HCT116 (cell line): ENCODE measurements at regions of chr3 and their contacts with region 1.

Region 1: GRCh38 chr3:50227390-50228183 is 8.4 kb upstream of the GNAI2 start:
- DNase-seq: peak; percentile 95
- ATAC-seq: peak; percentile 86
- H3K4me3 ChIP-seq: peak overlapping the region; percentile 58 to 87
- H3K27ac ChIP-seq: peak overlapping the region; percentile 87
- H3K4me1 ChIP-seq: peaks cover 10 to 34% of the 10 kb centered on the region in 2 experiments
- H3K27me3 ChIP-seq: no peaks in the 10 kb centered on the region
- CTCF ChIP-seq: peak in 2 of 3 experiments; percentile 70 to 76; a peak in 4 of 6 replicates
- POLR2A ChIP-seq: peak; percentile 62
- RAD21 ChIP-seq: no peak

Region 2: GRCh38 chr3:50121416-50122032 is 106.1 kb before region 1 on chr3:
- CTCF ChIA-PET with region 1: interaction called, 7 read pairs
- POLR2A ChIA-PET with region 1: no interaction called
- RAD21 ChIA-PET with region 1: no interaction called
- intact Hi-C with region 1: loop called (anchors 1 kb)
- DNase-seq: peak; percentile 56
- ATAC-seq: peak; percentile 94
- H3K4me3 ChIP-seq: no peak overlapping the region
- H3K27ac ChIP-seq: no peak overlapping the region
- H3K4me1 ChIP-seq: no peaks in the 10 kb centered on the region
- H3K27me3 ChIP-seq: no peaks in the 10 kb centered on the region
- CTCF ChIP-seq: peak; percentile 81 to 84 (median 82)
- POLR2A ChIP-seq: no peak
- RAD21 ChIP-seq: peak; percentile 91

Region 3: GRCh38 chr3:50181985-50182384 is 45.6 kb before region 1 on chr3:
- CTCF ChIA-PET with region 1: no interaction called
- POLR2A ChIA-PET with region 1: no interaction called
- RAD21 ChIA-PET with region 1: no interaction called
- intact Hi-C with region 1: no loop called
- DNase-seq: no peak
- ATAC-seq: no peak
- H3K4me3 ChIP-seq: no peak overlapping the region
- H3K27ac ChIP-seq: no peak overlapping the region
- H3K4me1 ChIP-seq: peaks cover 0 to 6% of the 10 kb centered on the region in 2 experiments; a peak in 1 of 4 replicates
- H3K27me3 ChIP-seq: no peaks in the 10 kb centered on the region
- CTCF ChIP-seq: no peak
- POLR2A ChIP-seq: no peak
- RAD21 ChIP-seq: no peak

Region 4: DNA sequence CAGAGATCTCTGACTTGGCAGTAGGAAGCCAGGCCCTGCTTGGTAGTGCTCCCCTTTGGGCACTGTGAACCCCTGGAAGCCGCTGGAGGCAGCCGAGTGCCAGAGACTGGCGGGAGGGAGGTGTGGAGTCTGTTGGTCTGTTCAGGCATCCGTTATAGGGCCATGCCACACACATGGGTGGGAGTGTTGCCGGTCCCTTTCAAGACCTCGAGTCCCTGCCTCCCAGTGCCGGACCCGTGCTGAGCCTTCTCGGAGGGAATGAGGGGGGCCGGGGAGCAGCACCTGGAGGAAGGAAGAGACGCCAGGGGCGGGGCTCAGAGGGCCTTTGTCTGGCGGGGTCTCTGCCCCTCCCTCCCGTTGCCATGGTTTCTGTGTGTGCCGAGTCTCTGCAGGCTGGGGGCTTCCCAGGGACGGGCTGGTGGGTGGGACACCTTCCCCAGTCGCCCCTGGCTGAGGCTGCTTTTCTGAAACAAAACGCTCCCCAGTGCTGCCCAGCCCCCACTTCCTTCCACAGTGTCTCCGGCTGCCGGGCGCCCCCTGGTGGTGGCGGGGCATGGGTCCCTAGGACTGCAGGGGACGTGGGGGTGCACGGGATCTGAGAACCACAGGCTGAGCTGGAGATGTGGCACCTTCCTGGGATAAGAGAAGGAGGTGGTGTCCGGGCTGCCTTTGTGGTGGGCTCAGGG is 18.4 kb after region 1 on chr3:
- CTCF ChIA-PET with region 1: interaction called, 34 read pairs
- POLR2A ChIA-PET with region 1: interaction called, 5 read pairs
- RAD21 ChIA-PET with region 1: interaction called, 10 to 11 read pairs
- intact Hi-C with region 1: loop called (anchors 1 kb)
- DNase-seq: no peak
- ATAC-seq: peak; percentile 87
- H3K4me3 ChIP-seq: peak overlapping the region; percentile 50 to 59
- H3K27ac ChIP-seq: peak overlapping the region; percentile 86
- H3K4me1 ChIP-seq: peaks cover 38 to 75% of the 10 kb centered on the region in 2 experiments
- H3K27me3 ChIP-seq: no peaks in the 10 kb centered on the region
- CTCF ChIP-seq: peak in 2 of 3 experiments; percentile 99; a peak in 4 of 6 replicates
- POLR2A ChIP-seq: no peak
- RAD21 ChIP-seq: no peak